ENCODE measurements at regions of chr10 and their contacts with region 1.

Region 1: DNA sequence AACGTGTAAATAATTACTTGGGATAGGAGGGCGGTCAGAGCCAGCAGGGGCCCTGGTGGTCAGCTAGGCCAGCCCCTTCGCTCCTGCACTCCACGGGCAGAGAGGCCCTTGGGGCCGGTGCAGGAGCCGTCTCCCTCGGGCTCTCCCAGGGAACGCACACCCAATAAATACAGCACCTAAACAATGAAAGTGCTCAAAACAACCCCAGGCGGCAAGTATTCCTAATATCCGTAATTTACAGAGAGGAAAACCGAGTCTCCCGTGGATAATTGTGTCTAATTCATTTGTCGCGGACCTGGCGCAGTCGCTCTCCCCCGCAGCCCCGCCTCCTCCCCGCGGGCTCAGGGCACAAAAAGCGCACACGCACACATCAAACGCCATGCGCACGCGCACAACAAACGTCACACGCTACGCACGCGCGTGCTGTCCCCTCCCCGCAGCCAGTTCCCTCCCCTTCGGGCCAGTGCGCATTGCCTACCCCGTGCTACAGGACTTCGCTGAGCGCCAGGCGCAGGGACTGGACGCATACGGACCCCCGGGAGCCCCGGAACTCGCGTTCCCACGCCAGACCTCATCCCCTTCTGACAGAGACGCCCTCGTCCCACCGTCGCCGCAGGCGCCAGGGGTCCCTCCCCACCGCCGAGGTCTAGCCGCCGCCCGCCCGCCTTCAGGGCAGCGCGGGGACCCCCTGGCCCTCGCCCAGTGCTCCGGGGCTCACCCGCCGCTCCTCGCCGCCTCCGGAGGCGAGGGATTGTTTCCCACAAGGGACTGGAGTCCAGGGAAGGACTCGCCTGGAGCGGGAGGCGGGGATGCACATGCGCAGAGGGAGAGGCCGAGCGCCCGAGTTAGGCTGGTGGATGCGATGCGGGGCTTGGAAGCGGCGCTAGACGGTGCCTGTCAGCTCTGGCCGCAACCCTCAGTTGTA is at the start of gene ZNF248:
- DNase-seq: peak; percentile 96 to 97 (median 96)
- H3K4me3 ChIP-seq: peak within 1 kb of the TSS; percentile 65 to 83 (median 67)
- H3K4me3 Mint-ChIP-seq: peak within 1 kb of the TSS; percentile 85 to 97
- H3K27ac ChIP-seq: peak within 1 kb of the TSS; percentile 53 to 96
- H3K27ac Mint-ChIP-seq: peak within 1 kb of the TSS; percentile 85 to 96 (median 94)
- H3K4me1 ChIP-seq: peaks cover 11 to 17% of the 10 kb centered on the region in 2 donors
- H3K4me1 Mint-ChIP-seq: peaks cover 19% of the 10 kb centered on the region
- H3K27me3 ChIP-seq: no peaks in the 10 kb centered on the region
- H3K27me3 Mint-ChIP-seq: peaks cover 0 to 9% (median 0%) of the 10 kb centered on the region in 3 donors
- CTCF ChIP-seq: no peak
- polyA plus RNA-seq, gene ZNF248: 0.44 to 2.2 (median 0.94) TPM

Region 2: DNA sequence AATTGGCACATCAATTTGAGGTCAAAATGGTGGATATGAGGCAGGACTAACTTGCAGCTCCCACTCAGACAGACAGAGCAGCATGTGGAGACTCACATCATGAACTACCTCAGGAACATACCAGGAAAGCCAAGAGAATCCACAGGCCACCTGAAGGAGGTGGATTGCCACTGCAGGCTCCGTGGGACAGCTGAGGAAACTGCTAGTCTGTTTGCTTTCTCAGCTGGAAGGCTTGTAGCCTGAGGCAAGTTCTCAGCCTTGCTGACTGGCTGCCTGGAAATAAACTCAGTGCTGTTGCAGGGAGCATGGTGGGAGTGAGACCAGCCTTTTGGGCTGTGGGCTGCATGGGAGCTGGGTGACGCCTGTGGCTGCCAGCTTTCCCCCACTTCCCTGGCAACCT is 203.1 kb before region 1 on chr10:
- intact Hi-C with region 1: no loop called
- DNase-seq: no peak
- H3K4me3 ChIP-seq: no peak overlapping the region
- H3K4me3 Mint-ChIP-seq: no peak overlapping the region
- H3K27ac ChIP-seq: no peak overlapping the region
- H3K27ac Mint-ChIP-seq: no peak overlapping the region
- H3K4me1 ChIP-seq: no peaks in the 10 kb centered on the region
- H3K4me1 Mint-ChIP-seq: no peaks in the 10 kb centered on the region
- H3K27me3 ChIP-seq: no peaks in the 10 kb centered on the region
- H3K27me3 Mint-ChIP-seq: peaks cover 0 to 1% (median 0%) of the 10 kb centered on the region in 3 donors
- CTCF ChIP-seq: no peak

Region 3: DNA sequence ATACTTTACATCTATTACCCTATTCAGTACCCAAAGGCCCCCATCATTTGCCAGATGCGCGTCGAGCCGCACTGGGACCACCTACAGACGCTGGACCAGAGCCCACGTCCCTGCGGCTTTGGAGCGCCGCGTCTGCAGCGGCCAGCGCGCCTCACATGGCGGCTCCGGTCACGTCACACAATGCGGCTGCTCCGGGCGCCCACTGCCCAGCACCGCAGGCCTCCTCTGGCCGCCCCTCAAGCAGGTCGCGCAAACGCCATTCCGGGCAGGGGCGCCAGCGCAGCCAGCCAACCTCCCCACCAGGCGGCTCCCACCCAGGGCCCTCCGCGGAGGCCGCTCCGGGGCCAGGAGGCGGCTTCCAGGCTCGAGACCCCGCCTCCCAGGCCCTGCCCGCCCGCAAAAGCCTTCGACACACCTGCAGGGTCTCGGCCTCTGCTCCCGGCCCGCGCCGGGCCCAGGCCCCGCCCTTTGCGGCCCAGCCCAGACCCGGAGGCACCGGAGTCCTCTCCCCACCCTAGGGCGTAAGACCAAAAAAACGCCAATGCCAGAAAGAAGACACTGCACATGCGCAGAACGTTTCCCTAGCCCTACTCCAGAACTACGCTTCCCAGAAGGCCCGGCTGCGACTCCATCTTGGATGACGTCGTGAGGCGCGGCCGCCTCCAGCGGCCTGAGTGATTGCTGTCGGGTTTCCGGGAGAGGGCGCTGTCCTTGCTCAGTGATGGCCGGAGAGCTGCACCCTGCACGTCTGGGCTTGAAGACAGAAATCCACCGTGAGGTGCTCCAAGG is 118.7 kb after region 1 on chr10 and contains the start of gene ZNF25:
- intact Hi-C with region 1: loop called (anchors 5 to 10 kb)
- DNase-seq: peak; percentile 98 to 99 (median 98)
- H3K4me3 ChIP-seq: peak within 1 kb of the TSS; percentile 63 to 86 (median 63)
- H3K4me3 Mint-ChIP-seq: peak within 1 kb of the TSS; percentile 89 to 95
- H3K27ac ChIP-seq: peak within 1 kb of the TSS; percentile 52 to 93
- H3K27ac Mint-ChIP-seq: peak within 1 kb of the TSS; percentile 89 to 96 (median 92)
- H3K4me1 ChIP-seq: peaks cover 7 to 15% of the 10 kb centered on the region in 2 donors
- H3K4me1 Mint-ChIP-seq: peaks cover 20% of the 10 kb centered on the region
- H3K27me3 ChIP-seq: no peaks in the 10 kb centered on the region
- H3K27me3 Mint-ChIP-seq: peaks cover 0 to 3% (median 0%) of the 10 kb centered on the region in 3 donors
- CTCF ChIP-seq: peak; percentile 88
- polyA plus RNA-seq, gene ZNF25: 5.5 to 6.7 (median 6.2) TPM

Region 4: GRCh38 chr10:38010119-38010903 is 152.8 kb after region 1 on chr10 and contains the start of gene ZNF33A:
- intact Hi-C with region 1: loop called in 1 of 2 experiments (anchors 10 kb)
- DNase-seq: peak; percentile 69 to 83 (median 82)
- H3K4me3 ChIP-seq: peak within 1 kb of the TSS; percentile 67 to 96 (median 92)
- H3K4me3 Mint-ChIP-seq: peak within 1 kb of the TSS; percentile 92 to 96
- H3K27ac ChIP-seq: peak within 1 kb of the TSS; percentile 99
- H3K27ac Mint-ChIP-seq: peak within 1 kb of the TSS; percentile 96 to 99 (median 98)
- H3K4me1 ChIP-seq: peaks cover 26 to 34% of the 10 kb centered on the region in 2 donors
- H3K4me1 Mint-ChIP-seq: peaks cover 32% of the 10 kb centered on the region
- H3K27me3 ChIP-seq: no peaks in the 10 kb centered on the region
- H3K27me3 Mint-ChIP-seq: peaks cover 0 to 3% (median 0%) of the 10 kb centered on the region in 3 donors
- CTCF ChIP-seq: no peak
- polyA plus RNA-seq, gene ZNF33A: 10.0 to 24.8 (median 10.3) TPM

Region 5: DNA sequence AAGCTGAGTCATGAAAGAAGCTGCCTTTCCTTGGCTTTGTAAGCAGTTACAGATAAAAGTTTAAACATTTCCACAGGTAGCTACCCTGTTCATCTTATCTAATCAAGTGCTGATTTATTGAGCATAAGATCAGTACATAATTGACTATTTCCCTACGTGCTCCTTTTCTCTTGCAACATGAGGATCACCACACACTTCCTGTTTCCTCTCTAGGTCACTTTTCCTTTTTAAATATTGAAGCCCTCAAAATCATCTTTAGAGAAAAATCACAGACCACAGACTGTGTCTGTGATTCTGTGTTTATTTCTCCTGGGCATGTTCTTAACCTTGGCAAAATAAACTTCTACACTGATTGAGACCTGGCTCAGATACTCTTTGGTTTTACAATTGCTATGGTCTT is 306.1 kb after region 1 on chr10:
- intact Hi-C with region 1: no loop called
- DNase-seq: no peak
- H3K4me3 ChIP-seq: no peak overlapping the region
- H3K4me3 Mint-ChIP-seq: no peak overlapping the region
- H3K27ac ChIP-seq: no peak overlapping the region
- H3K27ac Mint-ChIP-seq: no peak overlapping the region
- H3K4me1 ChIP-seq: no peaks in the 10 kb centered on the region
- H3K4me1 Mint-ChIP-seq: no peaks in the 10 kb centered on the region
- H3K27me3 ChIP-seq: no peaks in the 10 kb centered on the region
- H3K27me3 Mint-ChIP-seq: peaks cover 2 to 4% (median 3%) of the 10 kb centered on the region in 3 donors
- CTCF ChIP-seq: no peak